OCI-LY7 (cell line): ENCODE measurements at regions of chr19 and their contacts with region 1.

Region 1: DNA sequence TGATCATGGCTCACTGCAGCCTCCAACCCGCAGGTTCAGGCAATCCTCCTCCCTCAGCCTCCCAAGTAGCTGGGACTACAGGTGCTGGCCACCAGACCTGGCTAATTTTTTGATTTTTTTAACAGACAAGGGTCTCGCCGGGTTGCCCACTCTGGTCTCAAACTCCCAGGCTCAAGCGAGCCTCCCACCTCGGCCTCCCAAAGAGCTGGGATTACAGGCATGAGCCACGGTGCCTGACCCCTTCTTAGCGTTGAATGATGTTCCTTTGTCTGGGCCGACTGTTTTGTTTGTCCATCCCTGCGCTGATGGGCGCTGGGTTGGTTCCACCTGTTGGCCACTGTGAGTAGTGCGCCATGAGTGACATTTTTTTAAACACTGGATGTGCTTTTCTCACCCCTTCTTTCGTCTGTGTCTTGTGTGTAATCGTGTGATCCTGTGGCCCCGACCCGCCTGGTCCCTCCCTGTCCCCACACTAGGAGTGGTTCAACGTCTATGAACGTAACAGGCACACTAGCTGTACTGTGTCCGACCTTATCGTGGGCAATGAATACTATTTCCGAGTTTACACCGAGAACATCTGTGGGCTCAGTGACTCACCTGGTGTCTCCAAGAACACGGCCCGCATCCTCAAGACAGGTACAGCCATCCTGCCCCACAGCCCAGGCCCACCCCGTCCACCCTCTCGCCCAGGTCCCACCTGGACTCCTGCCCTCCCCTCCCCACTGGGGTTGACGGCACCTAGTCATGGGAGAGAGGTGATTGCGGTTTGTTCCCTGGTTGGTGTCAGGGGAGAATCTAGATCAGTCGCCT is 15.0 kb upstream of the EMC10 start:
- DNase-seq: peak; percentile 86
- H3K4me3 ChIP-seq: no peak overlapping the region
- H3K27ac ChIP-seq: peak overlapping the region; percentile 81
- H3K4me1 ChIP-seq: peaks cover 25% of the 10 kb centered on the region
- CTCF ChIP-seq: peak; percentile 89

Region 2: GRCh38 chr19:50368649-50369570 is 92.4 kb before region 1 on chr19:
- CTCF ChIA-PET with region 1: interaction called, 5 read pairs
- POLR2A ChIA-PET with region 1: no interaction called
- intact Hi-C with region 1: loop called (anchors 1 kb)
- DNase-seq: peak; percentile 92
- H3K4me3 ChIP-seq: peak overlapping the region; percentile 81
- H3K27ac ChIP-seq: peak overlapping the region; percentile 74
- H3K4me1 ChIP-seq: peaks cover 55% of the 10 kb centered on the region
- CTCF ChIP-seq: peak; percentile 92

Region 3: GRCh38 chr19:50420808-50421207 is 40.5 kb before region 1 on chr19:
- CTCF ChIA-PET with region 1: no interaction called
- POLR2A ChIA-PET with region 1: no interaction called
- intact Hi-C with region 1: no loop called
- DNase-seq: no peak
- H3K4me3 ChIP-seq: peak overlapping the region; percentile 80
- H3K27ac ChIP-seq: peak overlapping the region; percentile 91
- H3K4me1 ChIP-seq: peaks cover 49% of the 10 kb centered on the region
- CTCF ChIP-seq: no peak

Region 4: DNA sequence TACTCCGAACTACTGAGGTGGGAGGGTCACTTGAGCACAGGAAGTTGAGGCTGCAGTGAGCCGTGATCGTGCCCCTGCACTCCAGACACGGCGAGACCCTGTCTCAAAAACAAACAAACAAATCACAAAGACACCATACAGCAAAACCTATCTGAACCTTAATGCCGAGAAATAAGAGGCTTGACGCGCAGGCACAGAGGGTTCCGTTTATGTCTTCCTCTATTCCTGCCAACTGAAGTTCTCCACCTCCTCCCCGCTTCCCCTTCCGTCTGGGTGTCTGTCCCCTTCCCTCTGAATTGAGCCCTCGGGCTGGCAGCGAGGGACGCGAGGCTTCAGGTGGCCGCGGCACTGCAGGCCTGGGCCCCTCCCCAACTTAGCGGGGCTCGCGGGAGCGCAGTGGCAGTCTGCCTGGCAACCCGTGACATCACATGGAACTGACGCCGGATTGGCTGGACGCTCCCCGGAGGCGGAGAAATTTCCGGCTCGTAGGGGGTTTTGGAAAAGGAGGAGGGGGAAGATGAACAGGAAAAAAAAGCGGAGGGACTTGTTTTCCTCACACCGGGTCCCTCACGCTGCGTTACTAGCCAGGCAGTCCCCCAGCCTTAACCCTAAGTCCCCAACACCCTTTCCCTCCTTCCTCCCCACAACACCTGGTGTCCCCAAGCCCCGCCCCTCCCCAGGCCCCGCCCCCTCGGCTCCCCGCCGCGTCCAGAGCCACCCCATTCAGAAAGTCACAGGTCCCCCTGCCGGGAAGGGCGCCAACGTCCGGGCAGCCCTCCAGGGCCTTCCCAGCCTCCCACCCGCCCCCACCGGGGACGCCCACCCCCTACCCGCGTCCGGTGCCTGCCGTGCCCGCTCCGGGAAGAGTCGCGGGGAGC is 29.7 kb before region 1 on chr19:
- CTCF ChIA-PET with region 1: interaction called, 3 read pairs
- POLR2A ChIA-PET with region 1: interaction called, 3 read pairs
- intact Hi-C with region 1: loop called (anchors 1 kb)
- DNase-seq: peak; percentile 87
- H3K4me3 ChIP-seq: peak overlapping the region; percentile 68
- H3K27ac ChIP-seq: peak overlapping the region; percentile 87
- H3K4me1 ChIP-seq: peaks cover 87% of the 10 kb centered on the region
- CTCF ChIP-seq: no peak